Activated B cell treated with CpG ODN at 0.5 μM for 24 hours (primary cell): ENCODE measurements at regions of chr14 and their contacts with region 1.

Region 1: GRCh38 chr14:64986578-64987571 is at the start of gene FNTB:
- DNase-seq: peak; percentile 88
- ATAC-seq: peak; percentile 93
- H3K4me3 Mint-ChIP-seq: peak within 1 kb of the TSS; percentile 99
- H3K27ac Mint-ChIP-seq: peak within 1 kb of the TSS; percentile 99
- H3K4me1 Mint-ChIP-seq: peaks cover 34% of the 10 kb centered on the region
- H3K27me3 Mint-ChIP-seq: peaks cover 14% of the 10 kb centered on the region
- CTCF ChIP-seq: no peak
- total RNA-seq, gene FNTB: 7.9 and 10.5 TPM in 2 replicates

Region 2: GRCh38 chr14:64503478-64504309 is 483.2 kb before region 1 on chr14 and contains the start of gene ZBTB25:
- CTCF ChIA-PET with region 1: no interaction called
- POLR2A ChIA-PET with region 1: no interaction called
- intact Hi-C with region 1: loop called (anchors 10 kb)
- DNase-seq: peak; percentile 91
- ATAC-seq: peak; percentile 66
- H3K4me3 Mint-ChIP-seq: peak within 1 kb of the TSS; percentile 97
- H3K27ac Mint-ChIP-seq: peak within 1 kb of the TSS; percentile 100
- H3K4me1 Mint-ChIP-seq: peaks cover 73% of the 10 kb centered on the region
- H3K27me3 Mint-ChIP-seq: no peaks in the 10 kb centered on the region
- CTCF ChIP-seq: no peak
- total RNA-seq, gene ZBTB25: 20.9 and 29.1 TPM in 2 replicates

Region 3: DNA sequence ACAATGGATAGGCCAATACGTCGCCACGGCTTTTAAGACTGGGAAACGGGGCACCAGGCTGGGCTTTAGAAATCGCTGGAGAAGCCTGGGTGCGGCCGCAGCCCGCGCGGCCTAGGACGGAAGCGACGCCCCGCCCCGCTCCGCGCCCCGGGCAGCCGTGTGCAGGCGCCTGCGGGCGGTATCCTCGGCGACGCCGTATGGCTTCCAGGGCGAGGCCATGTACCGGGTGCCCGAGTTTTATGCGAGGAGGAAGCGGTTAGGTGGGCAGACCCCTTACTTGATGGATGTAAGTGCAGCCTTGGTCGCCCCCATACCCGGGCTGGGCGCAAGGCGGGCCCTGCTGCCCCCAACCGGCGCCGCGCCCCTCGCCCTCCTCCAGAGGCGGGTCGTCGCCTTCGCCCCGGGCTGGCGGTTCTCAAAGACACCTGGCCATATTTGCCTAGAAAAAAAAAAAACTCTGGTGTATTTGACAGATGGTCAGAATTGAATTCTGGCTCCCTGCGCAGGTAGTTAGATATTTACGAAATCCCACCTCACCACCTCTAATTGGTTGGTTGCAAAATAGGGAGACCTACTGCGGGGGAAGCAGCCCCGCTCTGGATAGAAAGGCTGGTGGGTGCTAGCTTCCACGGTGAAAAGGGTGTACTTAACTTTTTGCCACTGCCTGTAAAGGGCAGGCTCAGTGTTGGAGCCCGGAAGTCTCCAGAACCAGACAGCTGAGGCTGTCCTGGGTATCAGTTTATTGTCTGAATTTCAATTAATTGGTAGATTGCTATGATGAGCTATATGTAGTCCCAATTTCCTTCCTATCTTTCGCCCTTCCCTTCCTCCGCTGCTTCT is 436.9 kb before region 1 on chr14 and contains the start of gene PPP1R36:
- CTCF ChIA-PET with region 1: no interaction called
- POLR2A ChIA-PET with region 1: no interaction called
- intact Hi-C with region 1: no loop called
- DNase-seq: peak; percentile 41
- ATAC-seq: peak; percentile 96
- H3K4me3 Mint-ChIP-seq: peak within 1 kb of the TSS; percentile 66
- H3K27ac Mint-ChIP-seq: no peak within 1 kb of the TSS
- H3K4me1 Mint-ChIP-seq: peaks cover 13% of the 10 kb centered on the region
- H3K27me3 Mint-ChIP-seq: peaks cover 14% of the 10 kb centered on the region
- CTCF ChIP-seq: no peak
- total RNA-seq, gene PPP1R36: not detected in 2 replicates

Region 4: GRCh38 chr14:64764641-64765520 is 222.0 kb before region 1 on chr14:
- CTCF ChIA-PET with region 1: no interaction called
- POLR2A ChIA-PET with region 1: no interaction called
- intact Hi-C with region 1: loop called (anchors 5 kb)
- DNase-seq: peak; percentile 49
- ATAC-seq: peak; percentile 66
- H3K4me3 Mint-ChIP-seq: peak overlapping the region; percentile 59
- H3K27ac Mint-ChIP-seq: no peak overlapping the region
- H3K4me1 Mint-ChIP-seq: peaks cover 14% of the 10 kb centered on the region
- H3K27me3 Mint-ChIP-seq: peaks cover 15% of the 10 kb centered on the region
- CTCF ChIP-seq: no peak

Region 5: DNA sequence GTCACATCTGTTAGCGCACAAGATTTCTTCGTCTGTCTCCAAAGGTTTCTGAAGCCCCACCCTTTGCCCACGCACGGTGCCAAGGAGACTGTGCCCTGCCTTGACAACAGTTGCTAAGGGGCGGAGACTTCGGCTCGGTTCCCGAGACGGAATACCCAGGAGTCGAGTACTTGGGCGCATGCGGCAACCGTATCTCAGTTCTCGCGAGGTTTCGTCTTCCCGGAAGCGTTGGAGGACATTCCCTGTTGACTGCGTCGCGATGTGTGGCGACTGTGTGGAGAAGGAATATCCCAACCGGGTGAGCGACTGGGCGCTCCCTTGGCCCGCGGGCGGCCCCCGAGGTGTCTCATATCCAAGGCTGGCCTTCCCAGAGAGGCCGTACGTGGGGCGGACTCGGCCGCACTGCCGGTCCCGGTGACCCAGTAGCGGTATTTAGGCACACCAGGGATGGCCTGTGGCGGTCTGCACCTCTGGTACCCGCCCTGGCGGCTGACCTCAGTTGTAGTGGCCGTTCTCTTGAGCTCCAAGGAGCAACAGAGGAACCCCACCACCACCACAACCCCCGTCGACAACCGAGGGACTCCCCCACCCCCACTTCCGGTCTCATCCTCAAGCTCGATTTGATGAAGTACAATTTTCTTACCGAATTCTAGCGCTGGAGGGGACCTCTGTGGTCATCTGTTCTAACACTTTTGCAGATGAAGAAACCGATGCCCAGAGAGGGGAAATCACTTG is 72.5 kb before region 1 on chr14 and contains the start of gene CHURC1:
- CTCF ChIA-PET with region 1: no interaction called
- POLR2A ChIA-PET with region 1: interaction called, 9 read pairs
- intact Hi-C with region 1: loop called (anchors 1 kb)
- DNase-seq: peak; percentile 89
- ATAC-seq: peak; percentile 98
- H3K4me3 Mint-ChIP-seq: peak within 1 kb of the TSS; percentile 92
- H3K27ac Mint-ChIP-seq: peak within 1 kb of the TSS; percentile 88
- H3K4me1 Mint-ChIP-seq: peaks cover 43% of the 10 kb centered on the region
- H3K27me3 Mint-ChIP-seq: peaks cover 3% of the 10 kb centered on the region
- CTCF ChIP-seq: no peak
- total RNA-seq, gene CHURC1: 69.6 and 83.8 TPM in 2 replicates

Region 6: GRCh38 chr14:64971943-64972791 is 14.7 kb before region 1 on chr14 and contains the start of gene RAB15:
- CTCF ChIA-PET with region 1: no interaction called
- POLR2A ChIA-PET with region 1: no interaction called
- intact Hi-C with region 1: no loop called
- DNase-seq: peak; percentile 44
- ATAC-seq: peak; percentile 75
- H3K4me3 Mint-ChIP-seq: peak within 1 kb of the TSS; percentile 83
- H3K27ac Mint-ChIP-seq: no peak within 1 kb of the TSS
- H3K4me1 Mint-ChIP-seq: peaks cover 9% of the 10 kb centered on the region
- H3K27me3 Mint-ChIP-seq: peaks cover 3% of the 10 kb centered on the region
- CTCF ChIP-seq: no peak
- total RNA-seq, gene RAB15: 0.34 and 0.47 TPM in 2 replicates

Region 7: DNA sequence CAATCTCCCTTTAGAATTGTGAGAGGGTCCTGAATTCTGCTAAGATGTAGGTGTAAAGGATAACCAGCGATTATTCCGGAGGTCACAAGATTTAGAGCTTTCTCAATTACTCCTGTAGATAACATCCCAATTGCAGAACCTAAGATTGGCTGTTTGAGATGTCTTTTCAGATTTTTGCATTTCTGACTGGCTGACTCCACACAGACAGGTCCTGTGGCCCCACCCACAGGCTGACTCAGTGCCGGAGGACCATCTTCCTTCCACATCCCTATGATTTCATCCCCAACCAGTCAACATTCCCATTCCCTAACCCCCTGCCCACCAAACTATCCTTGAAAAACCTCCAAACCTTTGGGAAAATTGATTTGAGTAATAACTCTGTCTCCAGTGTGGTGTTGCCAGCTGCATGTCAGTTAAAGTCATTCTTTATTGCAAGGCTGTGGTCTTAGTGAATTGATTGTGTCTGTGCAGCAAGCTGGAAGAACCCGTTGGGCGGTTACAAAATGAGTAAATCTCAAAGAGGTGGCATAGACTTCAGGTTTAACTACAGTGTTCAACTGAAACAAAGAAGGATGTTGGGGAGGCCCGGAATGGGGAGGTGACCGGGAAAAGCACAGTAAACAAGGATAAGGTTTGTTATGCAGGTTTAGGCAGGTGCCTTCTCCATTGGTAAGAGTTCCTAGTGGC is 10.4 kb after region 1 on chr14:
- CTCF ChIA-PET with region 1: no interaction called
- POLR2A ChIA-PET with region 1: no interaction called
- intact Hi-C with region 1: no loop called
- DNase-seq: no peak
- ATAC-seq: no peak
- H3K4me3 Mint-ChIP-seq: peak overlapping the region; percentile 36
- H3K27ac Mint-ChIP-seq: no peak overlapping the region
- H3K4me1 Mint-ChIP-seq: peaks cover 3% of the 10 kb centered on the region
- H3K27me3 Mint-ChIP-seq: no peaks in the 10 kb centered on the region
- CTCF ChIP-seq: no peak

Region 8: DNA sequence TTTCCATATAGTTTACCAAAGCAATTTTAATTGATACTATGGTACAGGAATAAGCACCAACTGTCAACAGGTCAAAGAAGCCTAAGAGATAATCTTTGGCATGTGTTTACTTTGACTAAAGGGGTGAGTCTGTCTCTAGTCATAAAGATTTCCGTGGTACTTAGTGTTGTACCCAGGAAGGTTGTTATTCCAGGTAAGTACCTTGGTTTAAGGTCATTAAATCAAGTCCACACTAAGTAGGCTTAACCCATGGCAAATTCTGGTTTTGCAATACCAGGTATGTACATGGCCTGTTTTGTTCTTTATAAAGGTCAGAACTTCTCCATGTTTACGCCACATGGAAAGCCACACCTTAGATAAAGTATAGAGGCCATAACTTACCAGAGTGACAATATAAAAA is 105.5 kb after region 1 on chr14:
- CTCF ChIA-PET with region 1: no interaction called
- POLR2A ChIA-PET with region 1: no interaction called
- intact Hi-C with region 1: no loop called
- DNase-seq: no peak
- ATAC-seq: no peak
- H3K4me3 Mint-ChIP-seq: no peak overlapping the region
- H3K27ac Mint-ChIP-seq: no peak overlapping the region
- H3K4me1 Mint-ChIP-seq: peaks cover 31% of the 10 kb centered on the region
- H3K27me3 Mint-ChIP-seq: no peaks in the 10 kb centered on the region
- CTCF ChIP-seq: no peak

Region 9: GRCh38 chr14:65102441-65103149 is 115.7 kb after region 1 on chr14 and contains the start of gene MAX:
- CTCF ChIA-PET with region 1: interaction called, 8 read pairs
- POLR2A ChIA-PET with region 1: interaction called, 6 read pairs
- intact Hi-C with region 1: loop called (anchors 1 kb)
- DNase-seq: peak; percentile 92
- ATAC-seq: peak; percentile 86
- H3K4me3 Mint-ChIP-seq: peak within 1 kb of the TSS; percentile 89
- H3K27ac Mint-ChIP-seq: peak within 1 kb of the TSS; percentile 95
- H3K4me1 Mint-ChIP-seq: peaks cover 42% of the 10 kb centered on the region
- H3K27me3 Mint-ChIP-seq: no peaks in the 10 kb centered on the region
- CTCF ChIP-seq: no peak
- total RNA-seq, gene MAX: 115 and 116 TPM in 2 replicates

Region 10: GRCh38 chr14:65229751-65230749 is 243.2 kb after region 1 on chr14:
- CTCF ChIA-PET with region 1: no interaction called
- POLR2A ChIA-PET with region 1: no interaction called
- intact Hi-C with region 1: loop called (anchors 5 kb)
- DNase-seq: no peak
- ATAC-seq: peak; percentile 32
- H3K4me3 Mint-ChIP-seq: peak overlapping the region; percentile 86
- H3K27ac Mint-ChIP-seq: peak overlapping the region; percentile 87
- H3K4me1 Mint-ChIP-seq: peaks cover 64% of the 10 kb centered on the region
- H3K27me3 Mint-ChIP-seq: no peaks in the 10 kb centered on the region
- CTCF ChIP-seq: no peak

Region 11: GRCh38 chr14:65958664-65959562 is 972.0 kb after region 1 on chr14:
- CTCF ChIA-PET with region 1: interaction called, 12 read pairs
- POLR2A ChIA-PET with region 1: no interaction called
- intact Hi-C with region 1: no loop called
- DNase-seq: no peak
- ATAC-seq: peak; percentile 57
- H3K4me3 Mint-ChIP-seq: no peak overlapping the region
- H3K27ac Mint-ChIP-seq: no peak overlapping the region
- H3K4me1 Mint-ChIP-seq: no peaks in the 10 kb centered on the region
- H3K27me3 Mint-ChIP-seq: peaks cover 20% of the 10 kb centered on the region
- CTCF ChIP-seq: no peak